ENCODE measurements at regions of chr1 and their contacts with region 1.

Region 1: GRCh38 chr1:207052911-207053769 is at the start of gene PFKFB2:
- DNase-seq: peak; percentile 100
- ATAC-seq: peak; percentile 81
- H3K4me3 ChIP-seq: peak within 1 kb of the TSS; percentile 78
- H3K27ac ChIP-seq: peak within 1 kb of the TSS; percentile 95
- H3K4me1 ChIP-seq: peaks cover 55% of the 10 kb centered on the region
- H3K27me3 ChIP-seq: no peaks in the 10 kb centered on the region
- CTCF ChIP-seq: peak; percentile 35; the same call in 1 of the 2 replicates
- total RNA-seq, gene PFKFB2: 37.5 and 48.6 TPM in 2 replicates

Region 2: DNA sequence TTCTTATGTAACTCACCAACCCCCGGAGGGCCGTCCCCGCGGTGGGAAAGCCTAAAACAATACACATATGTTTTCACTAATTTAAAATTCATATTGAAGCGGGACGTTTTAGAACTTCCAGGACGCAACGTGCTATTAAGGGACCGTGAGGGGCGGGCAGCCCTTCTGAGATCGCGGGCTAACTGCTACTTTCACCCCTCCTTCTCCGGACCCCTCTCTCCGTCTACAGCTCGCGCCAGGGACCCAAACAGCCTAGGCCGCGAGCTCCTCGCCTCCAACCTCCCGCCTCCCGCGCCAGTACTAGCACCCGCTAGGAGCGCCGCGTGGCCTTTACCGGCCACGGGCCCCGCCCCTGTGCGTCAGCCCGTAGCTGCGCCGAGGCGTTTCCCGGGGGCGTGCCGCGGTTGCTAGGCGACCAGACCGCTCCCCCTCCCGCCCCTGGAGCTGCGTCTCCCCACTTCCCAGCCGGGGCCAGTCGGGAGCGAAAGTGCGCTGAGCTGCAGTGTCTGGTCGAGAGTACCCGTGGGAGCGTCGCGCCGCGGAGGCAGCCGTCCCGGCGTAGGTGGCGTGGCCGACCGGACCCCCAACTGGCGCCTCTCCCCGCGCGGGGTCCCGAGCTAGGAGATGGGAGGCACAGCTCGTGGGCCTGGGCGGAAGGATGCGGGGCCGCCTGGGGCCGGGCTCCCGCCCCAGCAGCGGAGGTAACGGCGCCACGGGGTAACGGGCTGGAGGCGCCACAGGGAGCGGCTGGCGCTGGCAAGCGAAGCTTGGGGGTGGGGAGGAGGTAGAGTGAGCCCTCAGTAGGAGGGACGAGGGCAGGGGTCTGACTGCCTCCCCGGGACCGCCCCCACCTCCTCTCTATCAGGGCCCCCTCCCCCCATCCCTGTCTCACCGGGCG is 417.8 kb before region 1 on chr1 and contains the start of gene DYRK3:
- CTCF ChIA-PET with region 1: no interaction called
- POLR2A ChIA-PET with region 1: no interaction called
- intact Hi-C with region 1: loop called (anchors 10 kb)
- DNase-seq: peak; percentile 98
- ATAC-seq: peak; percentile 82
- H3K4me3 ChIP-seq: peak within 1 kb of the TSS; percentile 85
- H3K27ac ChIP-seq: peak within 1 kb of the TSS; percentile 54
- H3K4me1 ChIP-seq: peaks cover 21% of the 10 kb centered on the region
- H3K27me3 ChIP-seq: no peaks in the 10 kb centered on the region
- CTCF ChIP-seq: no peak
- total RNA-seq, gene DYRK3: 12.1 and 14.1 TPM in 2 replicates

Region 3: GRCh38 chr1:207004981-207005830 is 47.9 kb before region 1 on chr1:
- CTCF ChIA-PET with region 1: interaction called, 11 read pairs
- POLR2A ChIA-PET with region 1: interaction called, 8 read pairs
- intact Hi-C with region 1: loop called (anchors 1 kb)
- DNase-seq: peak; percentile 97
- ATAC-seq: peak; percentile 33
- H3K4me3 ChIP-seq: no peak overlapping the region
- H3K27ac ChIP-seq: peak overlapping the region; percentile 92
- H3K4me1 ChIP-seq: peaks cover 82% of the 10 kb centered on the region
- H3K27me3 ChIP-seq: no peaks in the 10 kb centered on the region
- CTCF ChIP-seq: peak; percentile 98

Region 4: DNA sequence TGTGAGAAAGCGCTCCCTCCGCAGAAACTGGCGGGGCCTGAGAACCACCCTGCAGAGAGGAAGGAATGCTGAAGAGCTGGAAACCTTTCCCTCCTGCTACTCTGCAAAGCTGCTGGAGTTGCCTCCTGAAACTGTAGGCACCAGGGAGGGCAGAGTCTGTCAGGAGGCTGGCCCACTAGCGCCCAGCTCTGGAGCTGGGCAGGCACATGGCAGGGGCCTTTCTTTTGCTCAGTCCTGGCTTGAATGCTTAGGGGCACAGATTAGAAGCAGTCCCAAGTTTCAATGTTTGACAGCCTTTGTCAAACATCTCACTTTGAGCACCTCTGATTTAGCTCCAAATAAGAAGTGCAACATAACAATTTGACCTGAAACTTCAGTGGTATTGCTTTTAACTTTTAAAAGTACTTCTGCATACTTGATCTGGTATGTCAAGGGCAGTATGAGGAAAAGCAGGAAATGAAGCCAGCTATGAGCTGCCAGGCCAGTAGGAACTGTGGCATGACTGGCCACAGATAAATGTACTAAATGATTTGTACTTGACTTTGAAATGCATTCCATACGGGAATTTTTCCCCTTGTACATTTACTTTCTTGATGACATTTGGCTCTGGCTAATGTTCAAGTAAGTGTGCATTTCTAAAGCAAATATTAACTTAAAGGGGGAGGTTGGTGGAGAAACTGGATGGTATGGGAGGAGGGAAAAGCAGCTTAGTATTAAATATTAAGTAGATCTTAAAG is 27.8 kb before region 1 on chr1:
- CTCF ChIA-PET with region 1: interaction called, 7 read pairs
- POLR2A ChIA-PET with region 1: interaction called, 81 read pairs
- intact Hi-C with region 1: loop called (anchors 1 kb)
- DNase-seq: peak; percentile 99
- ATAC-seq: peak; percentile 18
- H3K4me3 ChIP-seq: peak overlapping the region; percentile 2; the same call in 1 of the 2 replicates
- H3K27ac ChIP-seq: peak overlapping the region; percentile 95
- H3K4me1 ChIP-seq: peaks cover 98% of the 10 kb centered on the region
- H3K27me3 ChIP-seq: no peaks in the 10 kb centered on the region
- CTCF ChIP-seq: 0 out of 2 replicates have a peak, but pooled peaks have one; percentile 11

Region 5: DNA sequence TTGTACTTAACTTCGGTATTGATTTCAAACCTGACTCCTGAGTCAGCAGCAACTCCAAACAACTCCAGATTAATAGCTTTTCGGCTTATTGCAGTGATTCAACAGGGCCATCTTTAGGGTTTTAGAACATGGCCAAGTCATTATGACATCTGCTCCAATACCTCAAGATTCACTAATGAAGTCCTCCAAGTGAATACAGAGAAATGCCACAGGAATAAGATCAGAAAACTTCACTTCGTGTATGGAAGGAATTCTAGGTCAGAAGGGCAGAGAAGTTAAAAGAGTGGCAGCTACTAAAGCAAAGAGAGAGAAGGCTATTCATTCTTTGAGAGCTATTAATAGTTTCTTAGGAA is 13.0 kb before region 1 on chr1:
- CTCF ChIA-PET with region 1: no interaction called
- POLR2A ChIA-PET with region 1: no interaction called
- intact Hi-C with region 1: no loop called
- DNase-seq: no peak
- ATAC-seq: no peak
- H3K4me3 ChIP-seq: no peak overlapping the region
- H3K27ac ChIP-seq: no peak overlapping the region
- H3K4me1 ChIP-seq: peaks cover 23% of the 10 kb centered on the region
- H3K27me3 ChIP-seq: no peaks in the 10 kb centered on the region
- CTCF ChIP-seq: no peak

Region 6: GRCh38 chr1:207077470-207078377 is 24.6 kb after region 1 on chr1:
- CTCF ChIA-PET with region 1: no interaction called
- POLR2A ChIA-PET with region 1: interaction called, 10 read pairs
- intact Hi-C with region 1: loop called (anchors 1 kb)
- DNase-seq: peak; percentile 98
- ATAC-seq: peak; percentile 68
- H3K4me3 ChIP-seq: no peak overlapping the region
- H3K27ac ChIP-seq: peak overlapping the region; percentile 3; the same call in 1 of the 2 replicates
- H3K4me1 ChIP-seq: peaks cover 37% of the 10 kb centered on the region
- H3K27me3 ChIP-seq: no peaks in the 10 kb centered on the region
- CTCF ChIP-seq: peak; percentile 99

Region 7: GRCh38 chr1:207499573-207499972 is 446.4 kb after region 1 on chr1:
- CTCF ChIA-PET with region 1: no interaction called
- POLR2A ChIA-PET with region 1: no interaction called
- intact Hi-C with region 1: loop called (anchors 1 kb)
- DNase-seq: peak; percentile 90
- ATAC-seq: peak; percentile 99
- H3K4me3 ChIP-seq: no peak overlapping the region
- H3K27ac ChIP-seq: no peak overlapping the region
- H3K4me1 ChIP-seq: no peaks in the 10 kb centered on the region
- H3K27me3 ChIP-seq: peaks cover 80% of the 10 kb centered on the region
- CTCF ChIP-seq: peak; percentile 99

Measured in PC-3 (cell line).